Aorta (tissue), 5 donors: ENCODE measurements at regions of chr10 and their contacts with region 1.

Region 1: DNA sequence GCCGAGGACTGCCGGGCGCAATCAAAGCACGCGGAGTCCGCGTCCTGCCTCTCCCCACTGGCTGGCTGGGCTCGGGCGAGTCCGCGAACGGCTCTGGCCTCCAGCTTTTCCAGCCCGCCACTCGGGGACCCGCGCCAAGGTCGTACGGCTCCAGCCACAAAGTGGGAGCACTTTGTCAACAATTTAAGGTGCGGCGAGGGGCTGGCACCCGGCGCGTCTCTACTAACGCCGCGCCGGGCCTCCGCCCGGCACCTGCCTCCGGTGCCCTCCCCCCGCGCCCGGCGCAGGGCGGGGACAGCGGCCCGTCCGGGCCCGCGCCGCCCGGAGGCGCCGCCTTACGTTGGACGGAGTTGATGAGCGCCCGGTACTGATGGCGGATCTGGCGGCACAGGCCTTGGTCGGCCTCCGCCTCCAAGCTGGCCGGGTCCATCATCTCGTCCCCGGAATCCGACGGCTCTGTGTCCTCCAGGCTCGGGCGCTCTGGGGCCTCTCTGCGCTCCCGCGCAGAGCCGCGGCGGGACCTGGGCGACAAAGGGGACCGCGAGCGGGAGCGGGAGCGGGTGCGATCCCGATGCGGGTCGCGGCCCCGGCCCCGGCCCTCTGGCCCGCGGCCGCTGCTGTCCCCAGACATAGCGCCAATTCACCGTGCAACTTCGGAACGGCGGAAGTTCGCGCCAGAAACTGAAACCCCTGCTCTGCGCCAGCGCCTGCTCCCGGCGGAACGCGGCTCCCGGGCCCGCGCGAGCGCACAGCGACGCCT is at the start of gene NSMCE4A:
- DNase-seq: peak; percentile 87 to 94
- ATAC-seq: peak; percentile 94
- H3K4me3 ChIP-seq: peak within 1 kb of the TSS; percentile 69 to 80
- H3K27ac ChIP-seq: peak within 1 kb of the TSS; percentile 46 to 78
- H3K4me1 ChIP-seq: no peaks in the 10 kb centered on the region
- H3K27me3 ChIP-seq: no peaks in the 10 kb centered on the region
- total RNA-seq, gene NSMCE4A: 36.7 to 50.3 TPM

Region 2: DNA sequence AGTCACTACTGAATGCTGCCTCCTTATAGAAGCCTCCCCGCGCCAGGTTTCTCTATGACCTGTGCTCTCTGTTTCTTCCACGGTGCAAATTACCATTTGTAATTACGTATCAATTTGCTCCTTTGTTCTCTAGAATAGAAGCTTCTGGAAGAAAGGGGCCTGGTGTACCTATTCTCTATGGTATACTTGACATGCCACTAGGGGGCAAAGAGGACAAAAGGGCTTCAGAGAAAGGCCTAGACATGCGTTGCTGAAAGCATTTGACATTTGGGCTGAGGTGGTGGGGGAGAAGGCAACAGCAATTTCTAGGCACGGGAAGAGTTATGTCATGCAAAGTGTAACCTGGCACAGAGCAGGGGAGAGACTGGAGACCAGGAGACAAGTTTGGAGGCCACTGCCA is 974.8 kb before region 1 on chr10:
- intact Hi-C with region 1: no loop called
- DNase-seq: no peak
- ATAC-seq: no peak
- H3K4me3 ChIP-seq: no peak overlapping the region
- H3K27ac ChIP-seq: no peak overlapping the region
- H3K4me1 ChIP-seq: no peaks in the 10 kb centered on the region
- H3K27me3 ChIP-seq: peaks cover 0 to 2% of the 10 kb centered on the region in 2 donors

Region 3: GRCh38 chr10:121927841-121928527 is 46.7 kb before region 1 on chr10 and contains the start of gene ATE1:
- intact Hi-C with region 1: loop called in 1 of 2 experiments (anchors 2 kb)
- DNase-seq: peak; percentile 92 to 96
- ATAC-seq: peak; percentile 97
- H3K4me3 ChIP-seq: peak within 1 kb of the TSS; percentile 80 to 90
- H3K27ac ChIP-seq: peak within 1 kb of the TSS; percentile 76 to 80
- H3K4me1 ChIP-seq: no peaks in the 10 kb centered on the region
- H3K27me3 ChIP-seq: no peaks in the 10 kb centered on the region
- total RNA-seq, gene ATE1: 26.6 to 30.0 TPM

Region 4: GRCh38 chr10:121956111-121957061 is 18.3 kb before region 1 on chr10:
- intact Hi-C with region 1: no loop called
- DNase-seq: no peak
- ATAC-seq: no peak
- H3K4me3 ChIP-seq: no peak overlapping the region
- H3K27ac ChIP-seq: no peak overlapping the region
- H3K4me1 ChIP-seq: no peaks in the 10 kb centered on the region
- H3K27me3 ChIP-seq: no peaks in the 10 kb centered on the region